Activated CD8-positive, alpha-beta T cell treated with anti-CD3 and anti-CD28 coated beads, Interleukin-2, amount 10 ng/mL, durations not matched to agents 7 days and 5 days (primary cell): ENCODE measurements at regions of chr3 and their contacts with region 1.

Region 1: DNA sequence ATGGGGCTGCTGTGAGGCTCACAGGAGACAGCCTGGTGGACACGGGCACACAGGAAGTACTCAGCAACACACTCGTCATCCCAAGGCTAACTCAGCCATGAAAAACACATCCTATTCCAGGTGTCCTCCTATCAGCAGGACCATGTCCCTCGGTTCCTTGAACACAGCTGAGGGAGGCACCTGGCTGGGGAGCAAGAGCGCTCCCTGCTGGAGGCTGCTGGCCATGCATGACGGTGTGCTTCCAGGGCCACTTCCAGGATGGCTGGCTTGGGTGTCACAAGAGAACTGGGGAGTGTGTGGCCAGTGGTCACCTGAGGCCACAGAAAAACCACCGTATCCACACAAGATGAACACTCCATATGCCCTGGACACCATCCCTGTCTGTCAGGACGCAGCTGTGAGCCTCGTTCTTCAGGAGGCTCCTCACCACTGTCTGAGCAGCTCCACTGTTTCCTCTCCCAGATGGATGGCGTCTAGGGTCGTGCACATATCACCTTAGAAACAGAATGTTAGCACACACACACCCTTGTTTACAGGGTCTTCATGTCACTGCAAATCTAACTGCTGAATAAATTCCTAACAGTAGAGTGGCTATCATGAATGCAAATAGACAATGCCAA is 31.0 kb downstream of the POC1A start:
- DNase-seq: peak; percentile 79
- ATAC-seq: peak; percentile 80
- H3K4me3 Mint-ChIP-seq: no peak overlapping the region
- H3K27ac Mint-ChIP-seq: no peak overlapping the region
- H3K4me1 Mint-ChIP-seq: peaks cover 32% of the 10 kb centered on the region
- H3K27me3 Mint-ChIP-seq: no peaks in the 10 kb centered on the region

Region 2: DNA sequence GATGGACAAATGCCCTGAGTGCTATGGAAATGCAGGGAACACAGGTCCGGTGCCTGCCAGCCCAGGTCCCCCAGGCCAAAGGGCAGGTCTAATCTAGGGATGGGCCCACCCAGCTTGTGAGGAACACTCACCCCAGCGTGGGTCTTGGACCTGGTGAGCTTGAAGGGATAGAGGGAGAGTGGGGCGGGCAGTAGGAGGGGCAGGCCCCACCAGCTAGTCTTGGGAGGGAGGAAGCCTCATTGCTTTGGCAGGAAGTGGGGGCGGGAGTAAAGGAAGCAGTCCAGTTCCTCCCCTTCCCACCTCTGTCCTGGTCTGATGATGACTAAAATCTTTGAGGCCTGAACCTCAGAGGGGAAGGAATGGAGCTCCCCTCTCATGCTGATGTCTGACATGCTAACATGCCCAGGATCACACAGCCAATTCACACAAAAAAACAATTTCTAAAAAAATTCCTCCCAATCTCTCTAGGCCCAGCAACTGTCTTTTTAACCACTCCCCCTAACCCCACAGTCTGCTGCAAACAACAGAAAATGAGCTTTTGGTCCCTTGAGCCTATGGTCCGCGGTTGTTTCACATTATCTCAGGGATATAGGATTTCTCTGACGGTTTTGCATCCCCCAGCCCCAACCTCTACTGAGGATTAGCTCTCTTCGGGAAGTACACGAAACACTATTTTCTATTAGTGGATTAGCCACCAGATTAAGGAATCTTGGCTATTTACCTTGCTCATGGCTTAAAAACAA is 36.1 kb before region 1 on chr3:
- CTCF ChIA-PET with region 1: interaction called, 25 read pairs
- POLR2A ChIA-PET with region 1: no interaction called
- DNase-seq: peak; percentile 27
- ATAC-seq: peak; percentile 13
- H3K4me3 Mint-ChIP-seq: no peak overlapping the region
- H3K27ac Mint-ChIP-seq: peak overlapping the region; percentile 84
- H3K4me1 Mint-ChIP-seq: peaks cover 44% of the 10 kb centered on the region
- H3K27me3 Mint-ChIP-seq: no peaks in the 10 kb centered on the region